HEK293 (cell line): ENCODE measurements at regions of chr10 and their contacts with region 1.

Region 1: DNA sequence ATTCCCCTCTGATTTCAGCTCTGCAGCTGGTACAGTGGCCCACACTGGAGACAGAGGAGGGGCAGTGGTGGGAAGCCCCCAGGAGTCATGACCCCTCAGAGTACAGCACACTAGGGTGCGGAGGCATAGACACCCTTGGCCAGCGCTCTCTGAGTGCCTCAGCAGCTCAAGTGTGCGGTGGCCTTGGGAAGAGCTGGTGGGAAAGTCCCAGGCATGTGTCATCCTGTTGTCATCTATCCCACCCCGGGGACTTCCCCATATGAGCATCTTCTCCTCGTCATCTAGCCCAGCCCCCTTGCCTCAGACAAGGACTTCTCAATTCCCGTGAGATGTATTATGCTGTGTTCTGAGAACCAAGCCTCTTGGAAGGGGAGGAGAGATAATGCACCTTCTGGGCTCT is 15.6 kb upstream of the PPIF start:
- H3K4me3 ChIP-seq: no peak overlapping the region
- H3K27ac ChIP-seq: no peak overlapping the region
- H3K4me1 ChIP-seq: no peaks in the 10 kb centered on the region
- CTCF ChIP-seq: no peak

Region 2: GRCh38 chr10:79347226-79347893 is 15.7 kb after region 1 on chr10 and contains the start of gene PPIF:
- CTCF ChIA-PET with region 1: interaction called, 8 read pairs
- POLR2A ChIA-PET with region 1: interaction called, 12 read pairs
- H3K4me3 ChIP-seq: peak within 1 kb of the TSS; percentile 67
- H3K27ac ChIP-seq: peak within 1 kb of the TSS; percentile 95
- H3K4me1 ChIP-seq: no peaks in the 10 kb centered on the region
- CTCF ChIP-seq: peak; percentile 76

Region 3: GRCh38 chr10:79445977-79446757 is 114.5 kb after region 1 on chr10:
- CTCF ChIA-PET with region 1: no interaction called
- POLR2A ChIA-PET with region 1: interaction called, 10 read pairs
- H3K4me3 ChIP-seq: peak overlapping the region; percentile 32
- H3K27ac ChIP-seq: peak overlapping the region; percentile 71
- H3K4me1 ChIP-seq: peaks cover 15% of the 10 kb centered on the region
- CTCF ChIP-seq: peak; percentile 55